ENCODE measurements at regions of chr17 and their contacts with region 1.

Region 1: GRCh38 chr17:41483991-41484826 is 3.3 kb upstream of the KRT35 start:
- DNase-seq: no peak
- H3K4me3 Mint-ChIP-seq: no peak overlapping the region
- H3K27ac Mint-ChIP-seq: no peak overlapping the region
- H3K4me1 Mint-ChIP-seq: no peaks in the 10 kb centered on the region
- H3K27me3 Mint-ChIP-seq: no peaks in the 10 kb centered on the region
- CTCF ChIP-seq: no peak

Region 2: DNA sequence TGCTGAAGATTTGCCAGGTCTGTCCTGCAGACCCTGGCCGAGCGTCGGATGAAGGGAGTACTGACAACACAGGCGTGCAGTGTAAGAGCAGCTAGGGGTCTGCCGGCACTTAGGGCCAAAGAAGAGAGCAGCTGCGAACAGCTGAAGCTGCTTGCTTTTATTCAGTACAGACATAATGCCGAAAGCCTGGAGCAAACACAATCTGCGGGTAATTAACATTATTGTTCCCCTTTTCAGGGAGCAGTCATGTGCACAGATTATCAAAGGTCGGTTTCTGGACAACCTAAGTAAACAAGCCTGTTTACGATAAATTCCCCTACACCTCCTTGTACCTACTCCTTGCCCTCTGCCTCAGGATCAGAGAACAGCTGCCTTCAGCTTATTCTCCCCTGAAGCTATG is 534.8 kb before region 1 on chr17:
- CTCF ChIA-PET with region 1: interaction called, 14 read pairs
- intact Hi-C with region 1: no loop called
- DNase-seq: peak; percentile 22
- H3K4me3 Mint-ChIP-seq: peak overlapping the region; percentile 27
- H3K27ac Mint-ChIP-seq: peak overlapping the region; percentile 13
- H3K4me1 Mint-ChIP-seq: peaks cover 90% of the 10 kb centered on the region
- H3K27me3 Mint-ChIP-seq: no peaks in the 10 kb centered on the region
- CTCF ChIP-seq: no peak

Region 3: GRCh38 chr17:41278176-41278955 is 205.8 kb before region 1 on chr17:
- CTCF ChIA-PET with region 1: no interaction called
- intact Hi-C with region 1: no loop called
- DNase-seq: no peak
- H3K4me3 Mint-ChIP-seq: no peak overlapping the region
- H3K27ac Mint-ChIP-seq: no peak overlapping the region
- H3K4me1 Mint-ChIP-seq: peaks cover under 1% of the 10 kb centered on the region
- H3K27me3 Mint-ChIP-seq: no peaks in the 10 kb centered on the region
- CTCF ChIP-seq: no peak

Region 4: DNA sequence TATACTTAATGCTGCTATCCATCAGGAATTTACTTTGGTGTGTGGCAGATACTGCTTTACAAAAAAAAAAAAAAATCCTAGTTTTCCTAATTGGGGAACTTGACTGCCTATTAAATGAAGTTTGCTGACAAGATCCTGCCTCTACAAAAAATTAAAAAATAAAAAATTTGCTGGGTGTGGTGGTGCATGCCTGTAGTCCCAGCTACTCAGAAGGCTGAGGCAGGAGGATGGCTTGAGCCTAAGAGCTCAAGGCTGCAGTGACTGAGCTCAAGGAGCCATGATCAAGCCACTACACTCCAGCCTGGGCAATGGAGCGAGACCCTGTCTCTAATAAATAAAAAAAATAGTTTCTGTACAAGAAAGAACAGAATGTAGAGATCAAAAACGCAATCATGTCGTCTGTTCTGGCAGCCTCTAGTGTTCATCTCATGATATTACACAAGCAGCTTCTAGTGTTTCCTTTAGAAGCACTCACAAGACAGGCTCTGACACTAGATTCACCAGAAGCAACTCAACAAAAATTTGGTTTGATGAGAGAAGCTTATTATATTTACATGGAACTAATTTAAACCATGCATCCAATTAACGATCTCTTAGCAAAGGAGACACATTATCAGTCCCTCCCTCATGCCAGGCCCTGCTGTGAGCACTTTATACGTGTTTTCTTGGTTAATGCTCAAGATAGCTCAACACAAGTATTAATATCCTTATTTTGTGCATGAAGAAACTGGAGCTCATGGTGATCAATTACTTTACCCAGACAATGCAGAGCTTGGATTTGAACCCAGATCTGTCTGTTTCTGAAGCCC is 161.9 kb before region 1 on chr17:
- CTCF ChIA-PET with region 1: no interaction called
- intact Hi-C with region 1: no loop called
- DNase-seq: no peak
- H3K4me3 Mint-ChIP-seq: no peak overlapping the region
- H3K27ac Mint-ChIP-seq: no peak overlapping the region
- H3K4me1 Mint-ChIP-seq: peaks cover 23% of the 10 kb centered on the region
- H3K27me3 Mint-ChIP-seq: no peaks in the 10 kb centered on the region
- CTCF ChIP-seq: peak; percentile 80

Region 5: GRCh38 chr17:41655611-41656351 is 171.6 kb after region 1 on chr17:
- CTCF ChIA-PET with region 1: no interaction called
- intact Hi-C with region 1: no loop called
- DNase-seq: peak; percentile 89
- H3K4me3 Mint-ChIP-seq: no peak overlapping the region
- H3K27ac Mint-ChIP-seq: peak overlapping the region; percentile 82
- H3K4me1 Mint-ChIP-seq: peaks cover 48% of the 10 kb centered on the region
- H3K27me3 Mint-ChIP-seq: no peaks in the 10 kb centered on the region
- CTCF ChIP-seq: no peak

Measured in Calu3 (cell line).